ENCODE measurements at regions of chr1 and their contacts with region 1.

Region 1: DNA sequence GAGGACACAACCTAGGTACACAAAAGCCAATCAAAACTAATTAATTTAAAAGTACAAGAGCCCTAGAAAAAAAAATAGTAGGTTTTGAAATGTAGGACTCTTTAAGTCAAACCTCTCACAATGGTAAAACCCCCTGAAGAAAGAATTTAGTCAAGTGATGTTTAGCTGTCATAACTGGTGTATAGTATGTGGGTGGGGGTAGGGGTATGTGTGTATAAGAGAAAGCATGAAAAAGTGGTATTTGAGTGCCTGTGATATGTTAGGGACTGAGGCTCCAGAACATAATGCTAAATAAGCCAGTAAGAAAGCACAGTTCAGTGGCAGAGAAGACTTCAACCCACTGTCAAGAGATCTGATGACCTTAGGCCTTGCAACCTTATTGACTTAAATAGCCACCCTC is 507.9 kb downstream of the TTLL7 start:
- DNase-seq: no peak
- H3K4me3 Mint-ChIP-seq: no peak overlapping the region
- H3K27ac Mint-ChIP-seq: peak overlapping the region; percentile 66
- H3K4me1 Mint-ChIP-seq: peaks cover 41% of the 10 kb centered on the region
- H3K27me3 Mint-ChIP-seq: no peaks in the 10 kb centered on the region

Region 2: GRCh38 chr1:83500987-83501591 is 10.1 kb after region 1 on chr1:
- intact Hi-C with region 1: loop called (anchors 1 kb)
- DNase-seq: peak; percentile 64
- H3K4me3 Mint-ChIP-seq: peak overlapping the region; percentile 39
- H3K27ac Mint-ChIP-seq: peak overlapping the region; percentile 86
- H3K4me1 Mint-ChIP-seq: peaks cover 41% of the 10 kb centered on the region
- H3K27me3 Mint-ChIP-seq: no peaks in the 10 kb centered on the region

Region 3: DNA sequence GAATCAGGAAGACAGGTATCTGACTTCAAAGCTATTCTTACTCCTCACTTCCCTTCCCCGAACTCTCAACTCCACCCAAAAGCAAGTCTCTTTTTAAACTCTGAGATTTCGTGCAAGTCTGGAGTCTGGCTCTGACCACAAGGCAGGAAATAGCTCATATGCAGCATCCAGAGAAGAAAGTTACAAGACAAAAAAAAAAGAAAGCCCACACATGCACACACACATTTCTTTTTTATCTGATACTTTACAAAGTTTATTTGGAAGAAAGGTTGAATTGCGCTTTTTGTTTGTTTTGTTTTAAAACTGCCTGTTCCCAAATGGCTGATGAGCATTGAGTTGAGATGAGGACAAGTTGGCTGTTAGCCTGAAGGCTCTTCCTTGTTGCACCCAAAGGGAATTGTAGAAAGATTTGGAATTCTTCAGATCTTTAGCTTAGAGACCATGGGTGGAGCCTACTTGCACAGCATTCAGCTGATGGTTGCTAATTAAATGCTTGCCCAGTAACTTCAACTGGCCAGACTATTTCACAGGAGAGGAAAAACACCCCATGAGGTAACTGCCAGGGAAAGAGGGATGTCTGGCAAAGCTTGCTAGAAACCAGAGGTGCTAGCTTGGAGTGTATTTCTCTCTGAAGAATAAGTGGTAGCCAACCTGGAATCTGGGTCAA is 17.6 kb after region 1 on chr1:
- intact Hi-C with region 1: loop called (anchors 2 kb)
- DNase-seq: peak; percentile 90
- H3K4me3 Mint-ChIP-seq: peak overlapping the region; percentile 64
- H3K27ac Mint-ChIP-seq: peak overlapping the region; percentile 94
- H3K4me1 Mint-ChIP-seq: peaks cover 49% of the 10 kb centered on the region
- H3K27me3 Mint-ChIP-seq: no peaks in the 10 kb centered on the region

Region 4: DNA sequence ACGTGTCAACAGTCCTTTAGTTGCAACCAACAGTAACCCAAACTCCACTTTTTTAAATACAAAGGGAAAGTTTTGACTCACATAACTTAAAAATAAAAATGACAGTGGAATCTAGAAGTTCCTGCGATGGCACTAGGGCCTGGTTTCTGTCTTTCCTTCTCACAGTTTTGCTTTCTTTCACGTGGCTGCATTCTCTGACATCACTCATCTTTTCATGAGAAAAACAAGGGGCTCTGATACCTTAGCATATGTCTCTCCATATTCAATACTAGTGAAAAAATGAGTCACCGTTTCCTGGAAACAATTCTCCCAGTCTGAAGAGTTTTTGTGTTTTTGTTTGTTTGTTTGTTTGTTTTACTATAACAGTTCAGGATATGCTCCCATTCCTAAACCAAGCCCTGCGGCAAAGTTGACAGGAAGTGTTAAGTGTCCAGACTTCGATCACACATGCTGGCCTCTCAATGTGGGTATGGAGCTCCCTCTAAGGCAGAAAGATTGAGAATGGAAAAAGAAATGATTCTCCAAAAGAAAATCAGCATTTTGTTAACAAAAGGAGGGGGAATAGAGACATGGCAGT is 24.7 kb after region 1 on chr1:
- intact Hi-C with region 1: loop called (anchors 2 kb)
- DNase-seq: peak; percentile 73
- H3K4me3 Mint-ChIP-seq: peak overlapping the region; percentile 49
- H3K27ac Mint-ChIP-seq: peak overlapping the region; percentile 92
- H3K4me1 Mint-ChIP-seq: peaks cover 26% of the 10 kb centered on the region
- H3K27me3 Mint-ChIP-seq: no peaks in the 10 kb centered on the region